BJ (cell line): ENCODE measurements at regions of chr1 and their contacts with region 1.

Region 1: GRCh38 chr1:212665241-212666115 is 34.2 kb downstream of the BATF3 start:
- DNase-seq: no peak
- H3K4me3 ChIP-seq: peak overlapping the region; percentile 75
- H3K27me3 ChIP-seq: no peaks in the 10 kb centered on the region
- CTCF ChIP-seq: peak; percentile 94

Region 2: DNA sequence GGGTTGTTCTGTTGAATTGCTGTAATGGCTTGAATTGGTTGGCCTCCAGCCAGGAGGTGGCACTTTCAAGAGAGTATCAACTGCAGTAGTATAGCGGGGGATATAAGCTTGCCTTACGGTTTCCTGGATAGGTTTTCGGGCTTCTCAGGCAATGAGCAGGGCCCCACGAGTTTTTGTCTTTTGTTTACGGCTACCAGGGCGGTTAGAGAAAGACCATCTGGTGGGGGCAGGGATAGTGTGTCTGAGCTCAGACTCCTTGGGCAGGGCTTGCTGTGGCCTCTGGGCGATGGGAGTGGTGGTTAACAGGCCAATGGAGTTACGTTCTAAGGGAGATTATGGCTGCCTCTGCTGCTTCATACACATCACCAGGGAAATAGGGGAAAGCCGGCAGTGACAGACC is 567.2 kb before region 1 on chr1:
- CTCF ChIA-PET with region 1: no interaction called
- POLR2A ChIA-PET with region 1: no interaction called
- DNase-seq: no peak
- H3K4me3 ChIP-seq: no peak overlapping the region
- H3K27me3 ChIP-seq: no peaks in the 10 kb centered on the region
- CTCF ChIP-seq: no peak

Region 3: GRCh38 chr1:212678456-212679410 is 13.3 kb after region 1 on chr1:
- CTCF ChIA-PET with region 1: interaction called, 14 read pairs
- POLR2A ChIA-PET with region 1: no interaction called
- DNase-seq: no peak
- H3K4me3 ChIP-seq: no peak overlapping the region
- H3K27me3 ChIP-seq: no peaks in the 10 kb centered on the region
- CTCF ChIP-seq: no peak

Region 4: DNA sequence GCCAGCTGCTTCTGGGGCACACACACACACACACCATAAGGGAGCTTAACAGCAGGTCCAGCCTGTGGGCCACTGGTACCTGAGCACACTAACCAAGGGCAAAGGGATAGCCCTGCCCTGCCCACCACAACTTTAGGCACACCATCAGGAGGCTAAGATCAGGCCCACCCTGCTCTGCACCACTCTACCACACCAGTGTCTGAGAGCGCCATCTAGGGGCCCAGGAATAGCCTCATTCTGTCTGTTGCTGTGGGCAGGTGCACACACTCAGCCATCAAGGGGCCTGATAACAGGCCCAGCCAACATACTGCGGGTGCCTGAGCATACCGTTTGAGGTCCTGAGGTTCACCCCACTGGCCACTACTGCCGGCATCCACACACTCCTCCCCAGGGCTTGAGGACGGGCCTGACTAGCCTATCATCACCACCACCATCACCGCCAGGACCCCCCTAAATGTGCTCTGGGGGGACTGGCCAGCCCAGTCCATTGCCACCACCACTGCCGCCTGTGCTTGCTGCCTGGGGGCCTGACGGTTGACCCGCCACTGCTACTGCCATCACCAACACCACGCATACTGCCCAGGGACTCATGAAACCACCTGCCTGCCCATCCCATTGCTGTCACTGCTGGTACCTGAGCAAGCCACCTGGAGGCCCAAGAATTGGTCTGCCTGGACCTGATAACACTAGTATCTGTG is 94.8 kb after region 1 on chr1:
- CTCF ChIA-PET with region 1: interaction called, 17 read pairs
- POLR2A ChIA-PET with region 1: no interaction called
- DNase-seq: no peak
- H3K4me3 ChIP-seq: no peak overlapping the region
- H3K27me3 ChIP-seq: no peaks in the 10 kb centered on the region
- CTCF ChIP-seq: peak; percentile 52

Region 5: DNA sequence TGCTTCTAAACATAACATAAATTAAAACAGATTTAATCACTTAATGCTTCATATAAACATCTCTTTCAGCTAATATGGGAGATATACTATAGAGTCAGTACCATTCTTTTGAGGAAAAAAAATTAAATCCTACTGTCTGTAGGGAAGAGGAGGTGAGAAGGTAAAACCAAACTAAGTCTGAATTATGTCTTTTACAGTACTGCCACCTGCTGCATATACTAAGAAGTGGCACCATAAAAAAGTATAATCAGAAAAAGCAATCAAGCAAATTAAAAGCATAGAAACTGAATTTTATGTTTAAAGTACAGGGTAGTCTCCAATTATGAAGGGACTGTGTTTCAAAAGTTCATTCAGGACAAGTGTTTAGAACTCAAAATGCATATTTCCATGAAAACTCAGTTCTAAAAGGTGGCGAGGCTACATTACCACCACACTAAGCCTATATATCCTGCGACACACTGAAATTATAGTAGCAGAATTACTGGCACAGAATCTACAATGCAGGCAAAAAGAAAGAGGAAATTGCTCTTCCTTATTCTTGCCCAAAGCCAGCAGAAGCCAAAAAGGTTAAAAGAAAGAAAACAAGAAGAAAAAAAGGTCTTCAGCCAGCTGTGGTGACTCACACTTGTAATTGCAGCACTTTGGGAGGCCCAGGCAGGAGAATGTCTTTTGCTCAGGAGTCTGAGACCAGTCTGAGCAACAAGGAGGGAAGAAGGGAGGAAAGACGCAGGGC is 117.1 kb after region 1 on chr1:
- CTCF ChIA-PET with region 1: interaction called, 35 read pairs
- POLR2A ChIA-PET with region 1: no interaction called
- DNase-seq: no peak
- H3K4me3 ChIP-seq: no peak overlapping the region
- H3K27me3 ChIP-seq: no peaks in the 10 kb centered on the region
- CTCF ChIP-seq: peak; percentile 59

Region 6: GRCh38 chr1:212928323-212929291 is 263.1 kb after region 1 on chr1:
- CTCF ChIA-PET with region 1: no interaction called
- POLR2A ChIA-PET with region 1: no interaction called
- DNase-seq: no peak
- H3K4me3 ChIP-seq: no peak overlapping the region
- H3K27me3 ChIP-seq: 0 out of 2 replicates have a peak, but pooled peaks cover 2% of the 10 kb centered on the region
- CTCF ChIP-seq: no peak

Region 7: DNA sequence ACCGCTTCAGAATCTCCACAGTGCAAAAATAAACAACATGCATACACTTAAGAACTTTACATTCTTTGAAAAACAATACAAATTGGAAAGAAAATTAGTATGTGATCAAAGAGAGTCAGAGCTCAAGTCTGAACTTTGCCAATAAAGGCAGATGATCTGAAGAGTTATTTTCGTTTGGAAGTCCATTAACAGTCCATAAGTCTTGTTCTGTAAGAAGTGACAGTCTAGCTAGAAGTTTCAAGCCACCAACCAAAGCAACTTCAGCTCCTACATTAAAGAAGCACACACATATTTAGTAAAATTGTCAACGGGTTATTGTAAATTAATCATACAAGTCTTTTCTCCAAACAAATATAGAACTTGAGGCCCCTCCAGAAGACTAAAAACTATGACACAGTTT is 329.4 kb after region 1 on chr1:
- CTCF ChIA-PET with region 1: interaction called, 13 read pairs
- POLR2A ChIA-PET with region 1: no interaction called
- DNase-seq: no peak
- H3K4me3 ChIP-seq: no peak overlapping the region
- H3K27me3 ChIP-seq: no peaks in the 10 kb centered on the region
- CTCF ChIP-seq: no peak